OCI-LY7 (cell line): ENCODE measurements at regions of chr11 and their contacts with region 1.

Region 1: GRCh38 chr11:61899146-61899841 is 7.9 kb upstream of the FADS3 start:
- DNase-seq: peak; percentile 92
- H3K4me3 ChIP-seq: no peak overlapping the region
- H3K27ac ChIP-seq: no peak overlapping the region
- H3K4me1 ChIP-seq: peaks cover 14% of the 10 kb centered on the region
- CTCF ChIP-seq: peak; percentile 98

Region 2: GRCh38 chr11:61797263-61797944 is 101.9 kb before region 1 on chr11:
- CTCF ChIA-PET with region 1: interaction called, 13 read pairs
- POLR2A ChIA-PET with region 1: interaction called, 3 read pairs
- intact Hi-C with region 1: loop called (anchors 1 kb)
- DNase-seq: peak; percentile 71
- H3K4me3 ChIP-seq: no peak overlapping the region
- H3K27ac ChIP-seq: no peak overlapping the region
- H3K4me1 ChIP-seq: peaks cover 20% of the 10 kb centered on the region
- CTCF ChIP-seq: peak; percentile 98

Region 3: GRCh38 chr11:61881397-61881796 is 17.9 kb before region 1 on chr11:
- CTCF ChIA-PET with region 1: interaction called, 13 read pairs
- POLR2A ChIA-PET with region 1: interaction called, 11 read pairs
- intact Hi-C with region 1: no loop called
- DNase-seq: peak; percentile 84
- H3K4me3 ChIP-seq: peak overlapping the region; percentile 85
- H3K27ac ChIP-seq: peak overlapping the region; percentile 94
- H3K4me1 ChIP-seq: peaks cover 70% of the 10 kb centered on the region
- CTCF ChIP-seq: no peak

Region 4: GRCh38 chr11:61967924-61968757 is 68.8 kb after region 1 on chr11:
- CTCF ChIA-PET with region 1: interaction called, 3 read pairs
- POLR2A ChIA-PET with region 1: no interaction called
- intact Hi-C with region 1: loop called (anchors 5 kb)
- DNase-seq: peak; percentile 54
- H3K4me3 ChIP-seq: peak overlapping the region; percentile 99
- H3K27ac ChIP-seq: peak overlapping the region; percentile 64
- H3K4me1 ChIP-seq: peaks cover 72% of the 10 kb centered on the region
- CTCF ChIP-seq: no peak

Region 5: DNA sequence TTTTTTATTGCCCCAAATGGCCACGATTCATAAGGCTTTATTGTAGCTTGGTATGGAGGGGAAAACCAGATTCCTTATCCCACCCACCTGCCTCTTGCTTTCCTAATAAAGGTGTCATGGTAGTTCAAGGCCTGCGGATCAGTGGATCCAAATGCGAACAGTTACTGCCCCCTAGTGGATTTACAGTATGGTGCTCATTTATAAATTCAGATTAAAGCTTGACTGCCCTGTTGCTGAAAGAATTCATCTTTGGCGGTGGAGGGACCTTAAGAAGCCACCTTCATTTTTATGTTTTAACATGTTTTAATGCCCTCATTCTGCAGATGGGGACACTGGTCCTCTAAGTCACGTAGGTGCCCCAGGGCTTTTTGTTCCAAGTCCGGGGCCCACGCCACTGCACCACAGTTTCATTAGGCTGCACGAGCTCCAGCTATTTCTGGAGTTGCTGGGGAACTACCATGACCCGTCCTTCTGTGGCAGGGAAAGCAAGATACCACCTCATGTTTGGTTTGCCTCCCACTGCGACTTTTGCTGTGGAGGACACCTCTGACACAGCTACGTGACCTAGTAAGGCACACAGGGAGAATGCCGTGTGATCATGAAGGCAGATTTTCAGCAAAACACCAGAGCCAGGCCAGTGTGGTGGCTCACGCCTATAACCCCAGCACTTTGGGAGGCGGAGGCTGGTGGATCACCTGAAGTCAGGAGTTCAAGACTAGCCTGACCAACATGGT is 208.9 kb after region 1 on chr11:
- CTCF ChIA-PET with region 1: interaction called, 10 read pairs
- POLR2A ChIA-PET with region 1: no interaction called
- intact Hi-C with region 1: loop called (anchors 5 kb)
- DNase-seq: peak; percentile 74
- H3K4me3 ChIP-seq: no peak overlapping the region
- H3K27ac ChIP-seq: no peak overlapping the region
- H3K4me1 ChIP-seq: no peaks in the 10 kb centered on the region
- CTCF ChIP-seq: peak; percentile 90